Body of pancreas (tissue), 4 donors: ENCODE measurements at regions of chr15 and their contacts with region 1.

Region 1: GRCh38 chr15:75493732-75494131 is 42.2 kb upstream of the SIN3A start:
- DNase-seq: no peak
- ATAC-seq: no peak
- H3K4me3 ChIP-seq: no peak overlapping the region
- H3K27ac ChIP-seq: no peak overlapping the region
- H3K4me1 ChIP-seq: no peaks in the 10 kb centered on the region
- H3K27me3 ChIP-seq: no peaks in the 10 kb centered on the region
- CTCF ChIP-seq: no peak
- POLR2A ChIP-seq: no peak

Region 2: GRCh38 chr15:74208901-74209559 is 1284.7 kb before region 1 on chr15:
- intact Hi-C with region 1: no loop called
- DNase-seq: peak in 1 of 4 donors; percentile 13
- ATAC-seq: peak; percentile 12
- H3K4me3 ChIP-seq: no peak overlapping the region
- H3K27ac ChIP-seq: no peak overlapping the region
- H3K4me1 ChIP-seq: peaks cover 13% of the 10 kb centered on the region
- H3K27me3 ChIP-seq: no peaks in the 10 kb centered on the region
- CTCF ChIP-seq: no peak
- POLR2A ChIP-seq: no peak

Region 3: GRCh38 chr15:75425966-75426500 is 67.7 kb before region 1 on chr15:
- intact Hi-C with region 1: loop called (anchors 5 kb)
- DNase-seq: no peak
- ATAC-seq: no peak
- H3K4me3 ChIP-seq: no peak overlapping the region
- H3K27ac ChIP-seq: no peak overlapping the region
- H3K4me1 ChIP-seq: no peaks in the 10 kb centered on the region
- H3K27me3 ChIP-seq: no peaks in the 10 kb centered on the region
- CTCF ChIP-seq: no peak
- POLR2A ChIP-seq: no peak

Region 4: GRCh38 chr15:75453703-75454470 is 39.8 kb before region 1 on chr15:
- intact Hi-C with region 1: no loop called
- DNase-seq: peak; percentile 98 to 99 (median 98)
- ATAC-seq: peak; percentile 54
- H3K4me3 ChIP-seq: peak overlapping the region in 1 of 2 donors; percentile 18
- H3K27ac ChIP-seq: peak overlapping the region; percentile 94 to 98 (median 96)
- H3K4me1 ChIP-seq: peaks cover 22% of the 10 kb centered on the region
- H3K27me3 ChIP-seq: no peaks in the 10 kb centered on the region
- CTCF ChIP-seq: peak in 2 of 7 experiments; percentile 18 to 20
- POLR2A ChIP-seq: peak; percentile 74 to 85 (median 83)

Region 5: GRCh38 chr15:75554717-75555116 is 61.0 kb after region 1 on chr15:
- intact Hi-C with region 1: no loop called
- DNase-seq: no peak
- ATAC-seq: no peak
- H3K4me3 ChIP-seq: no peak overlapping the region
- H3K27ac ChIP-seq: no peak overlapping the region
- H3K4me1 ChIP-seq: no peaks in the 10 kb centered on the region
- H3K27me3 ChIP-seq: no peaks in the 10 kb centered on the region
- CTCF ChIP-seq: no peak
- POLR2A ChIP-seq: no peak